ENCODE measurements at regions of chr1 and their contacts with region 1.

Region 1: DNA sequence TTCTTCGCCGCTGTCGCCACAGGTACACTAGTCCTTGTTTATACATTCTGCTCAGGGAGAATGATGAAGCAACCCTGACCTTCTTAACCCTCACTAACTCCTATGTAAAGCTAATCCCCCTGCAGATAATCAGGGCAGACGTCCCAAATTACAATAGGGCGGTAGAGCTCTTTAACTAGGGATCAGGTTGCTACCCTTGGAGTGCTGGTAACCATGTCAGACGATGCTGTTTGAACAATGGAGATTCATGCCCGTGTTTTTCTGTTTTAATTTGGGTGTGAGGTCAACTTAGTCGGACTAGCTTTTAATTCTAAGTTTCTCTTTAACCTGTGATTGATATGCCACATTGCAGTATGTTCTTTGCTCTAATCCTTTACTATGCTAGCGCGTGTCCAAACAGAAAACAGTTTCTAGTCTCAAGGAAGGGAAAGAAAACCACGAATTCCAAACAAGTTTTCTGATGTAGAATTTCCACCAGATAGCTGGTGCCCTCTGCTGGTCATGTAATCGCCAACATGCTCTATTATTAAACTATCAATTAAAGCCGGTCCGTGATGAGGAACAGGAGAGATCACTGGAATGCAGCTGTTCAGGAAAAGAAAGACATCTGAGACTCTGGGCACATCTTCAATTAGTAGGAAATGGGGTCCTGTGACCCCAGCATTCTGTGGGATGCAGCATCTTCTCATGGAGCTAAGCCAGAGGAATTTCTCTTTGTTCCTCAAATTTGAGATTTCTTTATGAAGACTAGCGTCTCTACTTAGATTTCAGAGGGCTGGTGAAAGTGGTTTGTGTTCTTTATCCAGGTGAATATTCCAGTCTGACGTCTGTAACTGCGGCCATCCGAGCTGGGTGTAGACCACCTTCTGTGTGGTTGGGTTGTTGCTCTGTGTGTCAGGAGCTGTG is 18.3 kb upstream of the VAMP3 start:
- DNase-seq: peak; percentile 50
- H3K4me3 Mint-ChIP-seq: peak overlapping the region; percentile 47
- H3K27ac Mint-ChIP-seq: no peak overlapping the region
- H3K4me1 Mint-ChIP-seq: peaks cover 9% of the 10 kb centered on the region
- H3K27me3 Mint-ChIP-seq: peaks cover 13% of the 10 kb centered on the region

Region 2: DNA sequence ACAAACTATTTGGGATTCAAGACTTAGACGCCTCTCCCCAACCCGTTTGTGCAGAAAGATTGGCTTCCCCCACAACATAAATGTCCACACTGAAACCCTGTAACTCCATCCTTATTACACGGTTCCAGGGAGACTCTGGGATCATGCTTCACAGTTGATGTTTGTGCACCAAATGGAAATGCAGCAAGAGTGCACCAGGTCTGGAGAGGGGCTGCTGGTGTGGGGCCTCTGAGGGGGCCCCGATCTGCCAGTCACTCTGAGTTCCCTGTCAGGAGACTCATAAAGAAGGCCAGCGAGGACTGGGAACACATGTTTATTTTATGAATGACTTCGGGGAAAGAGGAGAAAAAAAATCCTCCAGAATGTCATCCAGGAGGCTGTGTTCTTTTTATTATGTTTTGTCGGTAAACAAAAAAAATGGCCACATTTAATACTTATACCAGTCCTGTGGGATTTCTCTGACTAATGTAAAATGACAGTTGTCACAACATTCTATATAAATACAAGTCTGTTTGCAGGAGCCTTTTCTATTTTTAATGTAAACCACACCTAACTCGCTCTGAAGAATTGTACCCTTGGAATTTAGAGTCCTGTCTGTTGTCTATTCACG is 420.7 kb before region 1 on chr1:
- CTCF ChIA-PET with region 1: no interaction called
- POLR2A ChIA-PET with region 1: no interaction called
- intact Hi-C with region 1: no loop called
- DNase-seq: no peak
- H3K4me3 Mint-ChIP-seq: no peak overlapping the region
- H3K27ac Mint-ChIP-seq: no peak overlapping the region
- H3K4me1 Mint-ChIP-seq: no peaks in the 10 kb centered on the region
- H3K27me3 Mint-ChIP-seq: peaks cover 9% of the 10 kb centered on the region

Region 3: GRCh38 chr1:7672864-7673263 is 79.9 kb before region 1 on chr1:
- CTCF ChIA-PET with region 1: interaction called, 506 read pairs
- POLR2A ChIA-PET with region 1: interaction called, 3 read pairs
- intact Hi-C with region 1: no loop called
- DNase-seq: no peak
- H3K4me3 Mint-ChIP-seq: no peak overlapping the region
- H3K27ac Mint-ChIP-seq: no peak overlapping the region
- H3K4me1 Mint-ChIP-seq: no peaks in the 10 kb centered on the region
- H3K27me3 Mint-ChIP-seq: peaks cover 5% of the 10 kb centered on the region

Region 4: GRCh38 chr1:7694600-7695496 is 57.9 kb before region 1 on chr1:
- CTCF ChIA-PET with region 1: interaction called, 10 read pairs
- POLR2A ChIA-PET with region 1: no interaction called
- intact Hi-C with region 1: no loop called
- DNase-seq: no peak
- H3K4me3 Mint-ChIP-seq: no peak overlapping the region
- H3K27ac Mint-ChIP-seq: no peak overlapping the region
- H3K4me1 Mint-ChIP-seq: peaks cover 4% of the 10 kb centered on the region
- H3K27me3 Mint-ChIP-seq: peaks cover 5% of the 10 kb centered on the region

Region 5: GRCh38 chr1:7710859-7711258 is 41.9 kb before region 1 on chr1:
- CTCF ChIA-PET with region 1: interaction called, 11 read pairs
- POLR2A ChIA-PET with region 1: no interaction called
- intact Hi-C with region 1: no loop called
- DNase-seq: no peak
- H3K4me3 Mint-ChIP-seq: no peak overlapping the region
- H3K27ac Mint-ChIP-seq: no peak overlapping the region
- H3K4me1 Mint-ChIP-seq: peaks cover 3% of the 10 kb centered on the region
- H3K27me3 Mint-ChIP-seq: peaks cover 32% of the 10 kb centered on the region

Region 6: GRCh38 chr1:7902478-7903085 is 149.8 kb after region 1 on chr1:
- CTCF ChIA-PET with region 1: interaction called, 15 read pairs
- POLR2A ChIA-PET with region 1: no interaction called
- intact Hi-C with region 1: no loop called
- DNase-seq: peak; percentile 72
- H3K4me3 Mint-ChIP-seq: peak overlapping the region; percentile 37
- H3K27ac Mint-ChIP-seq: no peak overlapping the region
- H3K4me1 Mint-ChIP-seq: peaks cover 10% of the 10 kb centered on the region
- H3K27me3 Mint-ChIP-seq: no peaks in the 10 kb centered on the region